Activated B cell treated with CpG ODN at 0.5 μM for 24 hours (primary cell): ENCODE measurements at regions of chr16 and their contacts with region 1.

Region 1: DNA sequence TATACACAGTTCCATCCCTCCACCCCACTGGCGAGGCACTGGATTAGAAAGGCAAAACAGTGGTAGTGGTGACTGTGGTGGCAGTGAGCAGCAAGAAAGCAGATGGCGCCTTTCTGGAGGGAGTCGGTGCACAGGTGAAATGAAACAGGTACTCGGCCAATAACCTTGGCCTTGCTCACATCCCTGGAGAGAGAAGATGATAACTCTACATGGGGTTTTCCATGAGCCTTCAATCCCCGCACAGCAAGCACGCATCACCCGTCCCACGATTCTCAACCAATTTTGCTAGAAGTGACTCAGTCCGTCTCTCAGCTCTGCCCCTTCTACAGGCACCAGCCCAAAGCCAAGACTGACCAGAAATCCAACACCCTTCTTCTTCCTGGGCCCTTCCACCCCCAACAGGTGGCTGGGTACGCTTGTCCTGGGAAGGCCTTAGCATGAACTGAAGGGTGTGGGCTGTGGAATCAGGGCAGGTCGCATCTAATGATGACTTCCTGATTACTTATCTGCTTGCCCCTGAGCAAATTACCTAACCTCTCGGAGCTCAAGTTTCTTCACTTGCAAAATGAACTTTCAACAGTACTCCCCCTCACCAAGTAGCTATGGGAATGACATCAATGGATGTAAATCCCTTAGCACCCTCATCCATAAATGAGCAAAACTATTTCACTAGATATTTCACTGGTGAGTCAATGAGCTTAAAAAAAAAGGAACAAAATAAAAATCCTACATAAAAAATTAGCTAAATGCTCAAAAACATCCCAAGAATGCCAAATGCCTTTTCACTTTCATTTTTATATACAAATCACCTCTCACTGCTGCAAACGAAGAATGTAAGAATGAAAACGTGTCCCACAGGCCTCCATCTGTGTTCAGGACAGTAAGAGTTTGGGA is 18.0 kb downstream of the XPO6 start:
- DNase-seq: no peak
- ATAC-seq: peak; percentile 16
- H3K4me3 Mint-ChIP-seq: peak overlapping the region; percentile 82
- H3K27ac Mint-ChIP-seq: peak overlapping the region; percentile 98
- H3K4me1 Mint-ChIP-seq: peaks cover 81% of the 10 kb centered on the region
- H3K27me3 Mint-ChIP-seq: no peaks in the 10 kb centered on the region
- CTCF ChIP-seq: no peak

Region 2: DNA sequence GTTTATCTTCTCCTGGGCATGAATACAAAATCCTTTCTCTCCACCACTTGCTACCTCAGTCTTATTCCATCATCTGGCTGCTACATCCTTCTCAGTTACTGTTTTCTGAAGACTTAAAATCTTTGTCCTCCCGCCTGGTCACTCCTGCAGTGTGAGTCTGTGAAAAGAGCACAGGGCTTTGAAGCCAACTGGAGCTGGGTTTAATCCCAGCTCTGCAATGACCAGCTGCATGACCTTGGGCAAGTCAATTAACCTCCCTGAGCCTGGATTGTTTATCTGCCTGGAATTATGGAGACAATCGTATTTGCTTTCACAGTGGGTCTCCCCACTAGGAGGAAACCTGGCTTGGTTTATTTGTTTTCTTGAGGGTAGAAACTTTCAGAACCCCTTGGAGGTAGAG is 313.5 kb before region 1 on chr16:
- CTCF ChIA-PET with region 1: no interaction called
- POLR2A ChIA-PET with region 1: no interaction called
- intact Hi-C with region 1: no loop called
- DNase-seq: no peak
- ATAC-seq: no peak
- H3K4me3 Mint-ChIP-seq: no peak overlapping the region
- H3K27ac Mint-ChIP-seq: no peak overlapping the region
- H3K4me1 Mint-ChIP-seq: no peaks in the 10 kb centered on the region
- H3K27me3 Mint-ChIP-seq: peaks cover 8% of the 10 kb centered on the region
- CTCF ChIP-seq: no peak

Region 3: GRCh38 chr16:28181515-28181914 is 12.3 kb before region 1 on chr16:
- CTCF ChIA-PET with region 1: interaction called, 7 read pairs
- POLR2A ChIA-PET with region 1: interaction called, 20 read pairs
- intact Hi-C with region 1: loop called (anchors 1 kb)
- DNase-seq: no peak
- ATAC-seq: no peak
- H3K4me3 Mint-ChIP-seq: peak overlapping the region; percentile 77
- H3K27ac Mint-ChIP-seq: peak overlapping the region; percentile 89
- H3K4me1 Mint-ChIP-seq: peaks cover 81% of the 10 kb centered on the region
- H3K27me3 Mint-ChIP-seq: no peaks in the 10 kb centered on the region
- CTCF ChIP-seq: no peak